OCI-LY7 (cell line): ENCODE measurements at regions of chr5 and their contacts with region 1.

Region 1: DNA sequence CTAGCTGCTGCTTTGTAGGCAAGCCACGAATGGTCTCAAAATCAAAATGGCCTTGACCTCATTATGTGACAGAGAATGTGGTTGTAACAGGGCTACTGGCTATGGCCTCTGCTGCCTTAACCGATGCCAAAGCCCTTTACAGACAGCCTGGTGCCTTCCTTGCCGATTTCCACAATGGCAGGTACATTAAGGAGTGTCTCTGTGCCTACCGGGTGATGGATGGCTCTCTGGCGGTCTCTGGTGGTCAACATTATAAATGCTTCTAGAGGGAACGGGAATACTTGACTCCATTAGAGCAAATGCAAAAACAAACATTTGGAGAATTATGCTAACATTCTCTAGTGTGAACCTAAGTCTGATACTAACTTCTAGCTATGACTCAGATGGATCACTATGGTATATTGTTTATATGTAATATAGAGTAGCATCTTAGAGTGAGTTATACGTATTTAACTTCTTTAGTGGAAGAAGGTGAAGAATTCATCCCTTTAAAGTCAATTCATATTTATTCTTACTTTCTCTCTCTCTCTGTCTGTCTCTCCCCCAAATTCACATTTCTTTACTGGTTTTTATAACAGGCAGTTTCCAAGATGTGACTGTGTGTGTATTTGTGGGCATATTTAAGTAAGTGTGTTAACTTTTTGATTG is 52.5 kb downstream of the RPS23 start:
- DNase-seq: peak; percentile 65
- H3K4me3 ChIP-seq: no peak overlapping the region
- H3K27ac ChIP-seq: no peak overlapping the region
- H3K4me1 ChIP-seq: no peaks in the 10 kb centered on the region
- CTCF ChIP-seq: peak; percentile 95

Region 2: DNA sequence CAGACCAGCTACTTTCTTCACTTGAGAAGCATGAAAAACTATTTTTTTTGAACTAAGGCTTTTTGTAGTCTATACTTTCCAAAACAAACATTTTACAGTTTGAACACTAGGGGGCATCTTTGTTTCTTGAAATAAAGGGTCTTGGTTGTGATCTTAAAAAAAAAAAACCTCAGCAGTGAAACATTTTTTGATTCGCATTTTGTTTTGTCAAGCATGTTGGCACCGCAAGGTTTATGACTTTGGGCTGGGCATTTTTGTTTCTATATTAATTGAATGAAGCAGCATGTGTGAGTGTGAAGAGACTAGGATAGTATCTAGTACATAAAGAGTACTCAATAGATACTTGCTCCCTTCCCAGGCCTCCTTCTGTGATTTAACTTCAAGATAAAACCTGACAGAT is 800.1 kb before region 1 on chr5:
- CTCF ChIA-PET with region 1: no interaction called
- POLR2A ChIA-PET with region 1: no interaction called
- intact Hi-C with region 1: loop called (anchors 2 kb)
- DNase-seq: peak; percentile 75
- H3K4me3 ChIP-seq: no peak overlapping the region
- H3K27ac ChIP-seq: peak overlapping the region; percentile 24
- H3K4me1 ChIP-seq: peaks cover 13% of the 10 kb centered on the region
- CTCF ChIP-seq: peak; percentile 91

Region 3: GRCh38 chr5:81506900-81507588 is 718.6 kb before region 1 on chr5:
- CTCF ChIA-PET with region 1: no interaction called
- POLR2A ChIA-PET with region 1: no interaction called
- intact Hi-C with region 1: loop called (anchors 10 kb)
- DNase-seq: peak; percentile 92
- H3K4me3 ChIP-seq: no peak overlapping the region
- H3K27ac ChIP-seq: peak overlapping the region; percentile 40
- H3K4me1 ChIP-seq: peaks cover 37% of the 10 kb centered on the region
- CTCF ChIP-seq: peak; percentile 96

Region 4: GRCh38 chr5:82107267-82107666 is 118.4 kb before region 1 on chr5:
- CTCF ChIA-PET with region 1: no interaction called
- POLR2A ChIA-PET with region 1: interaction called, 3 read pairs
- intact Hi-C with region 1: loop called (anchors 10 kb)
- DNase-seq: no peak
- H3K4me3 ChIP-seq: no peak overlapping the region
- H3K27ac ChIP-seq: no peak overlapping the region
- H3K4me1 ChIP-seq: no peaks in the 10 kb centered on the region
- CTCF ChIP-seq: peak; percentile 75

Region 5: GRCh38 chr5:82174128-82174918 is 51.3 kb before region 1 on chr5:
- CTCF ChIA-PET with region 1: no interaction called
- POLR2A ChIA-PET with region 1: interaction called, 4 read pairs
- intact Hi-C with region 1: loop called (anchors 1 kb)
- DNase-seq: peak; percentile 73
- H3K4me3 ChIP-seq: peak overlapping the region; percentile 27
- H3K27ac ChIP-seq: peak overlapping the region; percentile 41
- H3K4me1 ChIP-seq: peaks cover 19% of the 10 kb centered on the region
- CTCF ChIP-seq: peak; percentile 98